Posterior vena cava (tissue), 2 donors: ENCODE measurements at regions of chr14 and their contacts with region 1.

Region 1: GRCh38 chr14:60349663-60350365 is 100.8 kb downstream of the PPM1A start:
- DNase-seq: no peak

Region 2: DNA sequence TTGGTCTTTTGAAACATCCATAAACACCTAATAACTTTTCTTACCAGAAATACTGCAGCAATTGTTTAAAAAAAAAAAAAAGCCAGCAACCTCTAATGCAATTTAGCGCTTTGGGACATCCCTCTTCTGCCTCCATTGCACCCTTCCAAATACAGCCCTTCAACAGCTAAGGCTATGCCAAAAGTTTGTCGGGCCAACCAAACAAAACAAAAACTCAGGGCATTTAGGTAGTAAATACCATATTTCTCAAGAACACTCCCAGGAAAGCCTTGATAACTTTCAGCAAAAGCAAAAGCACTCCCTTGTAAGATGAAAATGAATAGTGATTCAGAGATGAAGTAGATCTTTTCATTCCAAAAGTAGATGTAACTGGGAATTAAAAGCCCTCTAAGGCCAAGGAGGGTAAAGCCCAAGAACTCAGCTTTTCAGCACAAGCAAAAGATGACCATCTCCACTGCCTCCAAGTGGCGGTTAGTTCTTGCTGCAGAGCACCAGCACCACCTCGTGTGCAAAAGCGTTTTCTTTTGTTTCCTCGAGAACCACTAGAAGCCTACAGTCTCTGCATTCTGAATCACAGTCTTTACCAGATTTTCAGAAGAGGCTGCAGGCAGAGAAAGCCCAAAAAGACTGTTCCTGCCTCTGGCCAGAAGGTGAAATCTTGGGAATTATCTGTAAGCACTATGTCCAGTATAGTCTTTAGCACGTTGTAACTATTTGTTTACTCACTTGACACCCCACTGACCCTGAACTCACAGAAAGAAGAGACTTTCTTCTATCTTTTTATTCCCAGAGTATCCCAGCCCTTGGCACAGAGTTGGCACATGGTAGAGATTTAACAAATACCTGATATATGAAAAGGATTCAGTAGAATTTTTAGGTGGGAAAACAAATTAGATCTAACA is 212.3 kb after region 1 on chr14:
- intact Hi-C with region 1: loop called (anchors 10 kb)
- DNase-seq: peak; percentile 84